ENCODE measurements at regions of chr6 and their contacts with region 1.

Region 1: GRCh38 chr6:129359811-129360681 is 349.9 kb downstream of the ARHGAP18 start:
- DNase-seq: no peak
- H3K4me3 ChIP-seq: no peak overlapping the region
- H3K27ac ChIP-seq: no peak overlapping the region
- H3K27me3 ChIP-seq: no peaks in the 10 kb centered on the region
- CTCF ChIP-seq: no peak

Region 2: DNA sequence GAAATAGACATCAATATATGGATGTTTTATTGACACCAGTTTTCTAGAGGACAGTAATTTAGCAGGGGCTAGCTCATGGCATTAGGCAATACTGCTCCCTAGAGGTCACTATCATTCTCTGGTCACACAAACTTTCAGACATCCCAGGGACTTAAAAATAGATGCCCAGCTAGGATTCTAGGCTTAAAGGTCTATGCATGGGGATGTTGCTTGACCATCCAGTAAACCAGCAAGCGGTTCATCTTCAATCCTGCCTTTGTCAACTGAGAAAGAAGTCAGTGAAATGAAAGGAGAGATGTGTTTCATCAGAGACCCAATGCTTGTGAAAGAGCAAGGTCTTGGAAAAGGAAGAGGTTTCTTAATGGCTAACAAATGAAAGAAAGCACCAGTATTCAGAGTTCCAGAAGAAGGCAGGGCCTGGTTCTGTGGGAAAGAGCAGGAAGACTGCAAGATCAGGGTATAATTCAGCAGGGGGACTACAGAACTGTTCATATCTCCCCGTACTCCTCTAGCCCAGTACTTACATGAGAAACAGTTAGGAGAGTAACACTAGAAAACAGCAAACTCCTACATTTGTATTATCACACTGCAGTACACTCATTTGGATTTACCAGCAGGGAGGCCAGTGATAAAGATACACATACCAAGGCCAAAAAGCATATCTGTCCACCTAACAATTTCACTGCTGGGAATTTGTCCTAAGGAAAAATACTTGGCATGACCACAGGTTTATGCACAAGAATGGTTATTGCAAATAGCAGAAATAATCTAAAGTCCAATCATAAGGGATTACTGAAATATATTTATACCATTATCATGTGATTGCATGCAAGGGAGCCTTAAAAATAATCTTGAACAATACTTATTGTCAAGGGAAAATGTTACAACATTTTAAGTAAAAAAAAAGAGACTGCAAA is 628.5 kb before region 1 on chr6:
- intact Hi-C with region 1: loop called in 1 of 2 experiments (anchors 10 kb)
- DNase-seq: no peak
- H3K4me3 ChIP-seq: no peak overlapping the region
- H3K27ac ChIP-seq: peak overlapping the region in 26 of 59 donors; percentile 6 to 66 (median 36)
- H3K27me3 ChIP-seq: no peaks in the 10 kb centered on the region
- CTCF ChIP-seq: peak in 55 of 56 donors; percentile 34 to 85 (median 65)

Region 3: GRCh38 chr6:129050086-129050485 is 310.0 kb before region 1 on chr6:
- intact Hi-C with region 1: loop called in 1 of 2 experiments (anchors 10 kb)
- DNase-seq: no peak
- H3K4me3 ChIP-seq: no peak overlapping the region
- H3K27ac ChIP-seq: no peak overlapping the region
- H3K27me3 ChIP-seq: no peaks in the 10 kb centered on the region
- CTCF ChIP-seq: no peak

Region 4: GRCh38 chr6:129276986-129277385 is 83.1 kb before region 1 on chr6:
- intact Hi-C with region 1: loop called in 1 of 2 experiments (anchors 10 kb)
- DNase-seq: no peak
- H3K4me3 ChIP-seq: no peak overlapping the region
- H3K27ac ChIP-seq: peak overlapping the region in 50 of 59 donors; percentile 18 to 94 (median 70)
- H3K27me3 ChIP-seq: no peaks in the 10 kb centered on the region
- CTCF ChIP-seq: peak in 1 of 56 donors; percentile 20

Region 5: GRCh38 chr6:129292836-129293235 is 67.2 kb before region 1 on chr6:
- intact Hi-C with region 1: no loop called
- DNase-seq: peak in 1 of 10 donors; percentile 44
- H3K4me3 ChIP-seq: no peak overlapping the region
- H3K27ac ChIP-seq: peak overlapping the region in 5 of 59 donors; percentile 3 to 35 (median 11)
- H3K27me3 ChIP-seq: no peaks in the 10 kb centered on the region
- CTCF ChIP-seq: no peak